ENCODE measurements at regions of chr10 and their contacts with region 1.

Region 1: GRCh38 chr10:98170249-98171117 is 36.0 kb downstream of the R3HCC1L start:
- DNase-seq: peak; percentile 43
- H3K4me3 Mint-ChIP-seq: no peak overlapping the region
- H3K27ac Mint-ChIP-seq: no peak overlapping the region
- H3K4me1 Mint-ChIP-seq: peaks cover 3% of the 10 kb centered on the region
- H3K27me3 Mint-ChIP-seq: no peaks in the 10 kb centered on the region

Region 2: DNA sequence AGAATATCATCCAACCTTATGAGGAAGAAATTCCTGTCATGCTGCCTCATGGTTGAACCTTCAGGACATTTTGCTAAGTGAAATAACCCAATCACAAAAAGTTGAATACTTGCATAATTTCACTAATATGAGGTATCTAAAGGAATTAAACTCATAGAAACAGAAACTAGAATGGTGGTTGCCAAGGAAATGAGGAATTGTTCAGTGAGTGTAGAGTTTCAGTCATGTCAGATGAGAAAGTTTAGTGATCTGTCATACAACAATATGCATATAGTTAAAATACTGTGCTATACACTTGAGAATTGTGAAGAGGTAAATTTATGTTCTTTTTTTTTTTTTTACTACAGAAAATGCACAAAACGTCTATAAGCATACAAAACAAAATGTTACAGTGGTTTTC is 24.6 kb after region 1 on chr10:
- CTCF ChIA-PET with region 1: interaction called, 15 read pairs
- intact Hi-C with region 1: no loop called
- DNase-seq: no peak
- H3K4me3 Mint-ChIP-seq: no peak overlapping the region
- H3K27ac Mint-ChIP-seq: no peak overlapping the region
- H3K4me1 Mint-ChIP-seq: peaks cover 15% of the 10 kb centered on the region
- H3K27me3 Mint-ChIP-seq: no peaks in the 10 kb centered on the region

Region 3: DNA sequence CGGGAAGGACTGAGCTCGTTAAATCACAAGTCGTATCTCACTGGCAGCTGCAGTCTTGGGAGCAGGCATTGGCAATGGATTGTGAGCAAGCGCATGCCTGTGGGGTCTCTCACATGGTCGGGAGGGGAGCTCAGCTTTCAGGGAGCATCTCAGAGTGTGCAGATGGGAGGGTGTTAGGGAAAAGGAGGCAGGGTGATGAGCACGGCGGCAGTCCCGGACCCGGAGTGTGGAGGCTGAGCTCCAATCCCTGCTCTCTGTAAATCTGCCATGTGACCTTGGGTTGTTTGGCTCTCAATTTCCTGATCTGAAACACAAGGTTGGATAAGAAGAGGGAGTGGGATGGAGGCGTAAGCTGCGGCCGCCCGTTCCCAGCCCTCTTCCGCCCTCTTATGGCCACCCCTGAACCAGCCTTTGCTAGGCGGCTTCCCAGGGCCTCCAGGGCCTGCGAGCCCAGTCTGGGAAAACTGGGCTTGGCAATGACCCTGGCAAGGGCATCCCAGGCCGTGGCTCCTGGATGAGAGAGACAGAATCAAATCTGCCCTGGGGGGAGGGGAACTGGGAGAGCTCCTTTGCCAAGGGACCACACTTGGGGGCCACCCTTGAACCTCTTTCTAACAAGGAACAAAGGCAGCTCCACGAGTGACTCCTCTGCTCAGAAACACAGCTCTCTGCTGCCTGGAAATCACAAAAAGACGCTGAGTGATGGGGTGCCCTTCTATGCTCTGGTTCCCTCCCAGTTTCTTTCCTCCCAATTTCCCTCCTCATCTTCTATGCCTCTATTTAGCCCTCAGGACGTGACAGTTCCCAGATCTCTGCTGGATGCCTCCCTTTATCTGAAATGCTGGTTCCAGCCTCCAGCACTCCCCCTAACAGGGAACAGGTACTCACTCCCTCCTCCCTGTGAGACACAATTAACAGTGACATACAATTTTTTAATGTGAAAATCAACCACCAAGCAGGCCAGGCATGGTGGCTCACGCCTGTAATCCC is 139.2 kb after region 1 on chr10:
- CTCF ChIA-PET with region 1: interaction called, 22 read pairs
- intact Hi-C with region 1: loop called (anchors 1 kb)
- DNase-seq: peak; percentile 38
- H3K4me3 Mint-ChIP-seq: no peak overlapping the region
- H3K27ac Mint-ChIP-seq: no peak overlapping the region
- H3K4me1 Mint-ChIP-seq: peaks cover 4% of the 10 kb centered on the region
- H3K27me3 Mint-ChIP-seq: peaks cover 20% of the 10 kb centered on the region

Region 4: GRCh38 chr10:98331885-98332284 is 161.4 kb after region 1 on chr10:
- CTCF ChIA-PET with region 1: interaction called, 5 read pairs
- intact Hi-C with region 1: loop called (anchors 1 kb)
- DNase-seq: peak; percentile 48
- H3K4me3 Mint-ChIP-seq: no peak overlapping the region
- H3K27ac Mint-ChIP-seq: no peak overlapping the region
- H3K4me1 Mint-ChIP-seq: no peaks in the 10 kb centered on the region
- H3K27me3 Mint-ChIP-seq: peaks cover 9% of the 10 kb centered on the region

Measured in activated naive CD4-positive, alpha-beta T cell treated with anti-CD3 and anti-CD28 coated beads for 36 hours (primary cell).